OCI-LY7 (cell line): ENCODE measurements at regions of chr3 and their contacts with region 1.

Region 1: DNA sequence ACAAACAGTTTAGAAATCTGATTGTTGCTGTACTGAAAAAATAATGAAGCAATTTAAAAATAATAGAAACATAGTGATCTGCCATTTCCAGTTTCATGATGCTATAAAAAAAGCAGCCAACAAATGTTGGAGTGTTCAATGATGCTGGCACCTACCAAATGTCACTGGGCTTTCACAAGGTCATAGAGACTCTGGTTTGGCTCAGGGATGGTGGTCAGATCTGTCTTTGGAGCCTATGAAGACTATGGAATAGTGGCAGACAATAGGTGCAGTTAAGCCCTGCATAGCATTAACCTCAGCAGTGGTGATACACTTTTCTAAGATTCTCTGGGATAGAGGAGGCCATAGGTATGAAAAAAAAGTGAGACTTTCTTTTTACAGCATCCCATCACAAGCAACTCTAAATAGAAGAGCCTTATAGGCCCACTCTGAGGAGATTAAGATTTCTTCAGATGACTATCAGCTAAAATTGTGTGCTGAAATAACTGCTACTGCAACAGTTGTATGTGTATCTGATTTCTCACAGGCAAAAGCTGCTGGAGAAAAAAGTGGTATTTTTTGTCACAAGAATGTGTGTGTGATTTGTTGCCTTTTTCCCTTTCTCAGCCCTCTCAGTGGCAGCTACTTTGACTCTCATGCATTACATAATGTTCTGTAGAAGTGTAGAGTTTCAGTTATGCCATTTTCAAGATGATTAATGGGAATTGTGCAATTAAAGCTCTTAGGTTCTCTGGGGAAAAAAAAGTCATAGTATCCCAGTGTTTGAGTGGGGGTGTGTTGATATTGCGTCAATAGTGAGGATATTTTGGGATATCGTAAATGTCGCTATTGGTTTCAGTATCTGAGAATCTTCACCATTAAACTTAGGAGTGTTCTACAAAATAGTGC is 137.4 kb downstream of the MBNL1 start:
- DNase-seq: no peak
- H3K4me3 ChIP-seq: no peak overlapping the region
- H3K27ac ChIP-seq: no peak overlapping the region
- H3K4me1 ChIP-seq: peaks cover 10% of the 10 kb centered on the region
- CTCF ChIP-seq: no peak

Region 2: DNA sequence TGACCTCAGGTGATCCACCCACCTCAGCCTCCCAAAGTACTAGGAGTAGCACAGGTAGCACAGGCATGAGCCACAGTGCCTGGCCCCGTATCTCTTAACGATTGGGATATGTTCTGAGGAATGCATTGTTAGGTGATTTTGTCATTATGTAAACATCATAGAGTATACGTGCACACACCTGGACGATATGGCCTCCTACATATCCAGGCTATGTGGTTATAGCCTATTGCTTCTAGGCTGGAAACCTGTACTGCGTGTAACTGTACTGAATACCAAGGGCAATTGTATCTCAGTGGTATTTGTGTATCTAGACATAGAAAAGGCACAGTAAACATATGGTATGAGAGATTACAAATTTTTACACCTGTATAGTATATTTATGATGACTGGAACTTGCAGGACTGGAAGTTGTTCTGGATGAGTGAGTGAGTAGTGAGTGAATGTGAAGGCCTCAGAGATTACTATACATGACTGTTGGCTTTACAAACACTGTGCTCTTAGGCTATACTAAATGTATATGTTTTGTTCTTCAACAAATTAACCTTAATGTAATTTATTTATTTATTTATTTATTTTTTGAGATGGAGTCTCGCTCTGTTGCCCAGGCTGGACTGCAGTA is 16.7 kb before region 1 on chr3:
- CTCF ChIA-PET with region 1: interaction called, 4 read pairs
- POLR2A ChIA-PET with region 1: interaction called, 12 read pairs
- intact Hi-C with region 1: no loop called
- DNase-seq: no peak
- H3K4me3 ChIP-seq: no peak overlapping the region
- H3K27ac ChIP-seq: no peak overlapping the region
- H3K4me1 ChIP-seq: peaks cover 4% of the 10 kb centered on the region
- CTCF ChIP-seq: no peak